ENCODE measurements at regions of chr18 and their contacts with region 1.

Region 1: DNA sequence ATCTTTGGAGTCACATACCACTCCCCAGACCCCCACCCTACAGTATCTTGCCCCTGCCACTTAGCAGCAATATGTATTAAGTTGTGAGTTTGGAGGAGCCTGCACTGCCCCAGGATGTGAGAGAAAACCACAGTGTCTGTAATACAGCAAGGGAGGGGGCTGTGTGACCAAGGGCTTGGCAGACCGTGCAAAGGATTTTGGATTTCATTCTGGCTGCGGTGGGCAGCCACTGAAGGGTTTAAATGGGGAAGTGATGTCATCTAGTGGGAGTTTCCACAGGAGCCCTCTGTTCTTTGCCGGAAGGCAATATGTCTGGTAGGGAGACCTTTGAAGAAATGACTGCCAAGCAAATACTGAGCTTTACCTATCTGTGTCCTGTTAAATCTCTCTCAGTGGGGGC is 202.4 kb downstream of the FHOD3 start:
- DNase-seq: peak; percentile 66
- ATAC-seq: peak; percentile 96
- H3K4me3 ChIP-seq: no peak overlapping the region
- H3K27ac ChIP-seq: no peak overlapping the region
- H3K4me1 ChIP-seq: peaks cover 11% of the 10 kb centered on the region
- H3K27me3 ChIP-seq: no peaks in the 10 kb centered on the region
- CTCF ChIP-seq: no peak
- EP300 ChIP-seq: peak; percentile 27 to 54; a peak in 1 of 4 replicates
- POLR2A ChIP-seq: no peak
- RAD21 ChIP-seq: no peak

Region 2: GRCh38 chr18:36511791-36512352 is 11.9 kb after region 1 on chr18:
- CTCF ChIA-PET with region 1: interaction called, 7 read pairs
- POLR2A ChIA-PET with region 1: interaction called, 3 read pairs
- RAD21 ChIA-PET with region 1: interaction called, 6 read pairs
- SMC1A ChIA-PET with region 1: interaction called, 20 read pairs
- in situ Hi-C with region 1: no loop called
- intact Hi-C with region 1: loop called (anchors 2 kb)
- DNase-seq: no peak
- ATAC-seq: peak; percentile 37
- H3K4me3 ChIP-seq: no peak overlapping the region
- H3K27ac ChIP-seq: no peak overlapping the region
- H3K4me1 ChIP-seq: no peaks in the 10 kb centered on the region; the same call in 1 of the 2 replicates
- H3K27me3 ChIP-seq: no peaks in the 10 kb centered on the region
- CTCF ChIP-seq: no peak
- EP300 ChIP-seq: no peak
- POLR2A ChIP-seq: no peak
- RAD21 ChIP-seq: no peak

Region 3: DNA sequence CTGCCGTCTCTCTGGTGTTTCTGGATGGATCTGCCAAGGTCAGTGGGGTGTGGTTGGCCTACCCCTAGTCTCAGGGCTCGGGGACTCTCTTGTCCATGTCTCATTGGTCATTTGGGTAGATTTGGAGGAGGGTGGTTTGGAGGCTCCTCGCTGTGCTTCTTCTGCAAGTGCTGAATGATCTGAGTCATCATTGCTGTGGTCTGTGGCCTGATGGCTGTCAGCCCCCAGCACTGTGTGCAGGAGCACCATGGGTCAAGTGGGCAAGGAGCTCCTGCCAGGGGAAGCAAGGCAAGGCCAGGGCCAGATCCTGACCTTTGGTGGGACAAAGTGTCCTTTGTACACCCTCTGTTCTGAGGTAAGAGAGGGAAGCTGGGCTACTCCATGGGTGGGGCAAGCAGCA is 19.4 kb after region 1 on chr18:
- CTCF ChIA-PET with region 1: interaction called, 3 read pairs
- POLR2A ChIA-PET with region 1: interaction called, 3 read pairs
- RAD21 ChIA-PET with region 1: interaction called, 3 read pairs
- SMC1A ChIA-PET with region 1: interaction called, 11 read pairs
- in situ Hi-C with region 1: no loop called
- intact Hi-C with region 1: no loop called
- DNase-seq: no peak
- ATAC-seq: peak; percentile 87
- H3K4me3 ChIP-seq: no peak overlapping the region
- H3K27ac ChIP-seq: no peak overlapping the region
- H3K4me1 ChIP-seq: peaks cover 4% of the 10 kb centered on the region; the same call in 1 of the 2 replicates
- H3K27me3 ChIP-seq: no peaks in the 10 kb centered on the region
- CTCF ChIP-seq: no peak
- EP300 ChIP-seq: no peak
- POLR2A ChIP-seq: no peak
- RAD21 ChIP-seq: no peak

Region 4: GRCh38 chr18:36757081-36757480 is 257.1 kb after region 1 on chr18:
- CTCF ChIA-PET with region 1: no interaction called
- POLR2A ChIA-PET with region 1: no interaction called
- RAD21 ChIA-PET with region 1: no interaction called
- SMC1A ChIA-PET with region 1: no interaction called
- in situ Hi-C with region 1: no loop called
- intact Hi-C with region 1: no loop called
- DNase-seq: no peak
- ATAC-seq: peak; percentile 48
- H3K4me3 ChIP-seq: no peak overlapping the region
- H3K27ac ChIP-seq: no peak overlapping the region
- H3K4me1 ChIP-seq: no peaks in the 10 kb centered on the region
- H3K27me3 ChIP-seq: no peaks in the 10 kb centered on the region
- CTCF ChIP-seq: peak; percentile 31 to 54 (median 38); a peak in 5 of 6 replicates
- EP300 ChIP-seq: no peak
- POLR2A ChIP-seq: no peak
- RAD21 ChIP-seq: peak; percentile 58

Measured in GM12878 (cell line).